Colonic mucosa (tissue), 4 donors: ENCODE measurements at regions of chr7 and their contacts with region 1.

Region 1: DNA sequence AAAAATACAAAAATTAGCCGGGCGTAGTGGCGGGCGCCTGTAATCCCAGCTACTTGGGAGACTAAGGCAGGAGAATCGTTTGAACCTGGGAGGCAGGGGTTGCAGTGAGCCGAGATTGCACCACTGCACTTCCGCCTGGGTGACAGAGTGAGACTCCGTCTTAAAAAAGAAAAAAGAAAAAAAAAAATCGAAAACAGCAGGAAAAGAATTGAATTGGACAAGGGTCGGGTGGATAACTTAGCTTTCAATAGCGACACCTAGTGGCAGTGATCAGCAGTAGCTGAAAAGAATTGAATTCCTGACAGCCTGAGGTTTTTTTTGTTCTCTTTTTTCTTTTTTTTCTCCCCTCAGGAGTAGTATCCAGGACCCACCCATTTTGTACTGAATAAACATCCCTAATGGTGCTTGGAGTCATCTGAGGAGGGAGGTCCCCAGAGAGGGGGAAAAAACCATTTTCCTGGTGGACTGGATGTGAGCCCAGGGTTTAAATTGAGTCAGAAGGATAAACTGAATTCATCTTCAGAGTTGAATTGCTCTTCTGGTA is 55.1 kb downstream of the CYCS start:
- DNase-seq: peak; percentile 46
- H3K4me3 ChIP-seq: peak overlapping the region; percentile 25
- H3K27ac ChIP-seq: no peak overlapping the region
- H3K4me1 ChIP-seq: no peaks in the 10 kb centered on the region
- H3K27me3 ChIP-seq: no peaks in the 10 kb centered on the region
- CTCF ChIP-seq: peak; percentile 92

Region 2: GRCh38 chr7:24609059-24609458 is 460.9 kb before region 1 on chr7:
- intact Hi-C with region 1: no loop called
- DNase-seq: no peak
- H3K4me3 ChIP-seq: no peak overlapping the region
- H3K27ac ChIP-seq: no peak overlapping the region
- H3K4me1 ChIP-seq: no peaks in the 10 kb centered on the region
- H3K27me3 ChIP-seq: no peaks in the 10 kb centered on the region
- CTCF ChIP-seq: no peak

Region 3: DNA sequence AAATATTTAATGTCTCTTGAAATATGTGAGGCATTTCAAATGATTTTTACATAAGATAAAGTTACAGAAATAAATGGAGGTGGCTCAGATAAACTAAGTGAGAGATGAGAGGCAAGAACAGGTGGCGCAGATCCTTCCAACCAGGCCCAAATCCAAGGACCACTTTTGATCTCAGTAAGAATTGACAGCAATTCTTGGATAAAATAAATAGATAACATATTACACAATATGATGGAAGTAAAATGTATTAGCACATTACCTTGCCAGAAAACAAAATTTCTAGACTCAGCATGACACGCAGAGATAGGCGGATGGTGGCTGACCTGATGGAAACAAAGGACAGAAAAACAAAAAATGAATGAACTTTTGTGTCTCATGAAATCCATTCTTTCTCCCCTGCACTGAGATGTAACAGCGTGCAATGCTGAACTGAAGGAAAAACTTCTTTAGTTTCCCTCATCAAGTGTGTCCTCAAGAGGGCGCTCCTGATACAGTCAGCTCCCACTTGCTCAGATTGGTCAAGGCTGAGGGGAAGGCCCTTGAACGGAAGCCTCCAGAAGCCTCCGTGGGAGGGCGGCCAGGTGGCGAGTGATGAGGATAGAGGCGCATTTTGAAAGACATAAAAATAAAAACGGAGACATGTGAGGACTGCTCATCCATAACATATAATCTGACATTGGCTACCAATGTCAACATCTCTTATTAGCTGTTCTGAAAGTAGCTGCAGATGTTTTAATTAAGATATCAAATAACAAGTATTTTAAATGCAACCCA is 249.9 kb before region 1 on chr7:
- intact Hi-C with region 1: loop called (anchors 2 kb)
- DNase-seq: peak; percentile 92
- H3K4me3 ChIP-seq: no peak overlapping the region
- H3K27ac ChIP-seq: peak overlapping the region; percentile 68
- H3K4me1 ChIP-seq: peaks cover 5% of the 10 kb centered on the region
- H3K27me3 ChIP-seq: no peaks in the 10 kb centered on the region
- CTCF ChIP-seq: peak; percentile 77

Region 4: DNA sequence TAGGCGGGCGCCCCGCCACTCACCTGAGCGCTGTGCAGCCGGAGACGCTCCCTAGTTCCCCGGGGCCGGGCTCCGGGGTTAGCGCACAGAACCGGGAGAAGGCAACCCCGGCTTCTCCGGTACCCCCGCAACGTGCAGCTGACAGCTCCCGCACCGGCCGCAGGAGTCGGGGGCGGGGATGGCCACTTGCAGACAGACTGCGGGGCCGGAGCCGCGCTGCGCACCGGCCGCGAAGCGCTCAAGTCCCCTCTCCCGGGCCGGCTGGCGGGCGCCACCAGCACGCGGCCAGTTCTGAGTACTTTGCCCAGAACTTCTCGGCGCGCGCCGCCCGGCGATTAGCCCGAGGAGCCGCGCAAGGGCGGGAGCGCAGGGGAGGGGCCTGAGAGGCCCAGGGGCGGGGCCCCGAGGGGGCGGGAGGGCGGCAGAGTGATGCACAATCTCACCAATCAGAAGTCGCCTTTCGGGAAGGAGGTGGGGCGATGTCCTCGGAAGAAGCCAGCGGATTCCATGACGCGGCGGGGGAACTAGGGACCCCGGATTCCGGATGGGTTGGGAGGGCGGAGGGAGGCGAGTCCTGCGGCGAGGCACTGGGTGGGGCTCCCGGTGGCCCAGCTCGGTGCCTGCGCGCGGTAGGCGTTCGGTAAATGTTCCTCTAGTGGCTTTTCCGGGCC is 90.0 kb before region 1 on chr7 and contains the start of gene OSBPL3:
- intact Hi-C with region 1: loop called (anchors 5 kb)
- DNase-seq: peak; percentile 97
- H3K4me3 ChIP-seq: peak within 1 kb of the TSS; percentile 64
- H3K27ac ChIP-seq: peak within 1 kb of the TSS; percentile 88
- H3K4me1 ChIP-seq: no peaks in the 10 kb centered on the region
- H3K27me3 ChIP-seq: no peaks in the 10 kb centered on the region
- CTCF ChIP-seq: no peak
- total RNA-seq, gene OSBPL3: 9.0 to 14.8 TPM